Testis (tissue), 5 donors: ENCODE measurements at regions of chr13 and their contacts with region 1.

Region 1: GRCh38 chr13:27362064-27362883 is 62.1 kb upstream of the GTF3A start:
- DNase-seq: peak; percentile 93
- H3K4me3 ChIP-seq: peak overlapping the region; percentile 47 to 65
- H3K27ac ChIP-seq: no peak overlapping the region
- H3K4me1 ChIP-seq: peaks cover 5% of the 10 kb centered on the region
- H3K27me3 ChIP-seq: no peaks in the 10 kb centered on the region
- CTCF ChIP-seq: peak; percentile 75 to 88 (median 87)
- POLR2A ChIP-seq: no peak

Region 2: DNA sequence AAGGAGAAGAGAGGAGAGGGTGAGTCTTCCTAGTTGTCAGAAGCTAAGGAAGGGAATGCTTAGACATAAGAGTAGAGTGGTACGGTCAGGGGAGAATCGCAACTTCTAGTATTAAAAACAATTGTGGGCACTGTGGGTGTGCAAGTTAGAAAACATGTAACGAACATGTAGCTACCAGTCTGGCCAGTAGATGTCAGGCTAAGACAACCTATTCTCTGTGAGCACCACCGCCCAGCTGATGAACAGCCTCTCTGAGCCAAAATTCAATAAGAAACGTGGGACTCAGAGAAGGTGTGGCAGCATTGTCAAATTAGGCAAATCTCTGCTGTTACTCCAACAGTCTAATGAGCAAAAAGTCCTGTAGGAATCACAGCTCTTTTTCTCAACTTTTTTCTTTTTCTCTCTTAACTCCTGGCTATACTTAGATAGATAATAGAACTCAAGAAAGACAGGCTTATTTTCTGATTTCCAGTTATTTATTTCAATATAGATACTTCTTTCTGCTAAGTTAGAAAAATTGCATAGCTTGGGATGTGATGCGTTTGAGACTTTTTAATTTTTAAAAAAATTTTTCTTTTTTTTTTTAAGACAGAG is 376.9 kb before region 1 on chr13:
- intact Hi-C with region 1: loop called (anchors 5 kb)
- DNase-seq: peak; percentile 88
- H3K4me3 ChIP-seq: no peak overlapping the region
- H3K27ac ChIP-seq: no peak overlapping the region
- H3K4me1 ChIP-seq: peaks cover 3% of the 10 kb centered on the region
- H3K27me3 ChIP-seq: no peaks in the 10 kb centered on the region
- CTCF ChIP-seq: peak; percentile 60 to 86 (median 79)
- POLR2A ChIP-seq: no peak

Region 3: GRCh38 chr13:27980280-27980998 is 618.2 kb after region 1 on chr13:
- intact Hi-C with region 1: loop called (anchors 10 kb)
- DNase-seq: no peak
- H3K4me3 ChIP-seq: no peak overlapping the region
- H3K27ac ChIP-seq: no peak overlapping the region
- H3K4me1 ChIP-seq: peaks cover 10% of the 10 kb centered on the region
- H3K27me3 ChIP-seq: no peaks in the 10 kb centered on the region
- CTCF ChIP-seq: no peak
- POLR2A ChIP-seq: no peak